ENCODE measurements at regions of chr13 and their contacts with region 1.

Region 1: GRCh38 chr13:20721454-20722357 is 18.2 kb downstream of the IL17D start:
- DNase-seq: peak; percentile 68
- H3K4me3 ChIP-seq: peak overlapping the region in 2 of 3 experiments; percentile 3 to 27
- H3K27ac ChIP-seq: no peak overlapping the region
- H3K4me1 ChIP-seq: peaks cover 10% of the 10 kb centered on the region
- H3K27me3 ChIP-seq: no peaks in the 10 kb centered on the region
- CTCF ChIP-seq: peak in 1 of 2 donors; percentile 3
- POLR2A ChIP-seq: no peak

Region 2: GRCh38 chr13:20684546-20684945 is 37.2 kb before region 1 on chr13:
- CTCF ChIA-PET with region 1: no interaction called
- POLR2A ChIA-PET with region 1: no interaction called
- dilution Hi-C with region 1: no loop called
- intact Hi-C with region 1: no loop called
- DNase-seq: no peak
- H3K4me3 ChIP-seq: no peak overlapping the region
- H3K27ac ChIP-seq: no peak overlapping the region
- H3K4me1 ChIP-seq: no peaks in the 10 kb centered on the region
- H3K27me3 ChIP-seq: no peaks in the 10 kb centered on the region
- CTCF ChIP-seq: no peak
- POLR2A ChIP-seq: no peak

Region 3: GRCh38 chr13:20740021-20740420 is 18.3 kb after region 1 on chr13:
- CTCF ChIA-PET with region 1: interaction called, 10 read pairs
- POLR2A ChIA-PET with region 1: no interaction called
- dilution Hi-C with region 1: no loop called
- intact Hi-C with region 1: no loop called
- DNase-seq: no peak
- H3K4me3 ChIP-seq: no peak overlapping the region
- H3K27ac ChIP-seq: no peak overlapping the region
- H3K4me1 ChIP-seq: no peaks in the 10 kb centered on the region
- H3K27me3 ChIP-seq: no peaks in the 10 kb centered on the region
- CTCF ChIP-seq: no peak
- POLR2A ChIP-seq: no peak

Region 4: DNA sequence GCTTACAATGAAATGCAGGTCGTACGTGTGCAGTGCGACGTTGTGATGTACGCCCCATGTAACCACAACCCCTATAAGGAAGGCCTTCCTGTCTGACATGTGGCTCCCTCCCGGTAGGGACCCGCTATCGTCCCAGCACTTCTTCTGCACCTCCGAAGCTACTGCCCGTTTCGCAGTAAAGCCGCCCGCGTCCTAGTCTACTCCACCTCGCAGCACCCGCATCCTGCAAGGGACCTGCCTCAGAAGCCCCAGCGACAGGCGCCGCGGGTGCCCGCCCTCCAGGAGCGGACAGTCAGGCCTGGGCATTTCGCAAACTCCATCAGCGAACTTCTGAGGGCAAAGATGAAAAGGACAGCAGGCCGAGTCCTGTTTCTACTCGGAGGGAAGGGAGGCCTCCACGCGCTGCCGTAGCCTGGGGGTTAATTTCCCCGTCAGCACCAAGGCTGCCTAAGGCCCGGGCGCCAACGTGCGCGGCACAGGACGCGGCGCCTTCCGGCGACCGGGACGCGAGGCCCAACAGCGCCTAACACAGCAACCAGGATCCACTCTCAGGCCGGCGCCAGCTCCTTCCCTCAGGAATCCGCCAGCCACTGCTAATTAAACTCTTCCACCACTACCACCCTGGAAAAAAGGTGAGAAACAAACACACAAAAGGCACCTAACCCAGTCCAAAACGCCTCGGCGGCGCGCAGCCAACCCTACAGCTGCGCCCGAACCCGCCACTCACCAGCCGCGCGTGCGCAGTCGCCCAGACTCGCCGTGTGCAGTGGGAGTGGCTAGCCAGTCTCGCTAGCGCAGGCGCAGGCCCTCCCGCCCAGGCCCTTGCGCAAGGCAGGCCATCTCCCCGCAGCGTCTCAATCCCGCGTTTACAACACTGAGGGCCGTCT is 51.7 kb after region 1 on chr13 and contains the start of gene EEF1AKMT1:
- CTCF ChIA-PET with region 1: no interaction called
- POLR2A ChIA-PET with region 1: no interaction called
- dilution Hi-C with region 1: no loop called
- intact Hi-C with region 1: loop called (anchors 2 kb)
- DNase-seq: peak; percentile 91
- H3K4me3 ChIP-seq: peak within 1 kb of the TSS; percentile 13 to 60 (median 35)
- H3K27ac ChIP-seq: peak within 1 kb of the TSS; percentile 88
- H3K4me1 ChIP-seq: peaks cover 18% of the 10 kb centered on the region
- H3K27me3 ChIP-seq: no peaks in the 10 kb centered on the region
- CTCF ChIP-seq: no peak
- POLR2A ChIP-seq: peak; percentile 56
- total RNA-seq, gene EEF1AKMT1: 8.7 and 11.1 TPM in 2 replicates